Sigmoid colon (tissue), 7 donors: ENCODE measurements at regions of chr1 and their contacts with region 1.

Region 1: GRCh38 chr1:87684194-87684593 is 355.5 kb downstream of the LMO4 start:
- DNase-seq: no peak
- H3K4me3 ChIP-seq: peak overlapping the region; percentile 36 to 52 (median 44)
- H3K27ac ChIP-seq: peak overlapping the region; percentile 5 to 77 (median 72)
- H3K4me1 ChIP-seq: peaks cover 0 to 35% (median 30%) of the 10 kb centered on the region in 4 donors
- H3K27me3 ChIP-seq: no peaks in the 10 kb centered on the region
- CTCF ChIP-seq: no peak
- EP300 ChIP-seq: no peak
- POLR2A ChIP-seq: no peak

Region 2: DNA sequence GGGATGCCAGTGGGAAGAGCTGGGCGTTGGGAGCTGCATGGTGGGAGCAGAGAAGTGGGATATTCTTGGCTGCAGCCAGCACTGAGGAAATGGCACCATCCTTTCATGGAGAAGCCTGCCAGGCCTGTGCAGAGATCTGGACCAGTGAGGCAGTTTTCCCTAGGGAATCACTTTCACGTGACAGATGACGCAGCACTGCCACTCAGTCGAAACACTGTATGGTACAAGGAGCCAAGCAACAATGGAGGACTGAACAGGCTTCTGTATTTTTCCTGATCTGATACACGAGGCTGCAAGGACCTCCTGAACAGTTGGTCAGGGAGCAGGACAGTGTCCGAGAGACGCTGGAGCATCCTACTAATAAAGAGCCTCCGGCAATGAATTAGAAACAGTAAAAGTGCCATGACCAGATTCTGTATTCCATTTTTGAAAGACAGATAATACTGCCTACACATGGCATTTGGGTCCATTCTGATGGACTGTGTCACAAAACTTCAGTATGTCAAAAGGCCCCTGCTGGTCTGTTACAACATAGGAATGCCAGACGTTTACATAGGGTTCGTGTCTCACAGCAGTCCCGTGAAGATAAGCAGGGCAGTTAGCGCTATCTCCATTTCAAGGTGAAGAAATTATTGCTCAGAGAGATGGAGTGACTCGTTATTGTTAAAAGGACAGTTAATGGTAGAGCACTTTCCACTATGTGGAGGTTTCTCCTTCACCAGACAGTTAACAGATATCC is 399.5 kb before region 1 on chr1:
- intact Hi-C with region 1: no loop called
- DNase-seq: no peak
- H3K4me3 ChIP-seq: no peak overlapping the region
- H3K27ac ChIP-seq: no peak overlapping the region
- H3K4me1 ChIP-seq: no peaks in the 10 kb centered on the region
- H3K27me3 ChIP-seq: no peaks in the 10 kb centered on the region
- CTCF ChIP-seq: no peak
- EP300 ChIP-seq: no peak
- POLR2A ChIP-seq: no peak

Region 3: GRCh38 chr1:87787551-87787950 is 103.4 kb after region 1 on chr1:
- intact Hi-C with region 1: loop called (anchors 2 kb)
- DNase-seq: no peak
- H3K4me3 ChIP-seq: no peak overlapping the region
- H3K27ac ChIP-seq: no peak overlapping the region
- H3K4me1 ChIP-seq: peaks cover 0 to 7% (median 2%) of the 10 kb centered on the region in 4 donors
- H3K27me3 ChIP-seq: no peaks in the 10 kb centered on the region
- CTCF ChIP-seq: no peak
- EP300 ChIP-seq: no peak
- POLR2A ChIP-seq: no peak

Region 4: GRCh38 chr1:87888446-87888845 is 204.3 kb after region 1 on chr1:
- intact Hi-C with region 1: loop called (anchors 5 kb)
- DNase-seq: no peak
- H3K4me3 ChIP-seq: no peak overlapping the region
- H3K27ac ChIP-seq: peak overlapping the region in 2 of 4 donors; percentile 35 to 48
- H3K4me1 ChIP-seq: peaks cover 0 to 36% (median 25%) of the 10 kb centered on the region in 4 donors
- H3K27me3 ChIP-seq: no peaks in the 10 kb centered on the region
- CTCF ChIP-seq: no peak
- EP300 ChIP-seq: no peak
- POLR2A ChIP-seq: no peak

Region 5: DNA sequence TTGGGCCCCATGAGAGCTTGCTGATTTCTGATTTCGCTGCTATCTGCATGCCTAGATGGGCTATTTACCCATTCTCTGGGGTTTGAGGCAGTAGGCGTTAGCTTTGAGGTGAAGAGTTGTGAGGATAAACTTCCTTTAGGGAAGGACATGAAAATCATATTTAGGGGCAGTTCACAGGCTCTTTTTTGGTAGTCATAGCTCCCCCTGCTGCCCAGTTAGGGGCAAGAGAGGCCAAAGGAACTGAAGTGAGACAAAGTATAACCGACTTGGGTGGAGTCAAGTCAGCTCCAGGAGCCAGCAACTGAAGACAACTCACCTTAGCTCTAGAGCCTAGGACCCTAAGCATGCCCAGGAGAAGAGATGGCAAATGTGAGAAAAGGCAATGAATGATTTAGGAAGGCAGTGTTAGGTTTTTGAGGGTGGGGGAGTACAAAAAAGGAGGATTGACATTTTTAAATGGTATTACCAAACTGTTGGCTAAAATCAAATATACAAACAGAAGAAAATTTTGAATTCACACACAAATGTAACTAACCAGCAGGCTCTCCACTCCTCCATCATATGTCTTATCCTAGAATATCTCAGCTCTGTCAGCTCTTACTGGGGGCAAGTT is 269.6 kb after region 1 on chr1:
- intact Hi-C with region 1: loop called (anchors 5 kb)
- DNase-seq: peak; percentile 77
- H3K4me3 ChIP-seq: no peak overlapping the region
- H3K27ac ChIP-seq: no peak overlapping the region
- H3K4me1 ChIP-seq: peaks cover 0 to 26% (median 11%) of the 10 kb centered on the region in 4 donors
- H3K27me3 ChIP-seq: no peaks in the 10 kb centered on the region
- CTCF ChIP-seq: peak; percentile 50 to 79 (median 58)
- EP300 ChIP-seq: peak in 1 of 4 donors; percentile 5
- POLR2A ChIP-seq: no peak

Region 6: GRCh38 chr1:88061492-88062177 is 377.4 kb after region 1 on chr1:
- intact Hi-C with region 1: loop called (anchors 10 kb)
- DNase-seq: peak; percentile 72
- H3K4me3 ChIP-seq: no peak overlapping the region
- H3K27ac ChIP-seq: no peak overlapping the region
- H3K4me1 ChIP-seq: peaks cover 0 to 12% (median 6%) of the 10 kb centered on the region in 4 donors
- H3K27me3 ChIP-seq: no peaks in the 10 kb centered on the region
- CTCF ChIP-seq: peak; percentile 37 to 83 (median 76)
- EP300 ChIP-seq: no peak
- POLR2A ChIP-seq: no peak